HepG2 (cell line): ENCODE measurements at regions of chr6 and their contacts with region 1.

Region 1: GRCh38 chr6:25992413-25993037 is 29.9 kb downstream of the TRIM38 start:
- DNase-seq: peak; percentile 93
- ATAC-seq: peak; percentile 96
- H3K4me3 ChIP-seq: peak overlapping the region; percentile 81 to 88 (median 81)
- H3K27ac ChIP-seq: peak overlapping the region; percentile 90
- H3K4me1 ChIP-seq: peaks cover 25% of the 10 kb centered on the region
- H3K27me3 ChIP-seq: no peaks in the 10 kb centered on the region
- CTCF ChIP-seq: peak; percentile 96
- EP300 ChIP-seq: peak; percentile 50 to 79; a peak in 3 of 4 replicates
- POLR2A ChIP-seq: peak; percentile 81 to 96
- RAD21 ChIP-seq: peak; percentile 97

Region 2: GRCh38 chr6:25794784-25795183 is 197.7 kb before region 1 on chr6:
- CTCF ChIA-PET with region 1: no interaction called
- POLR2A ChIA-PET with region 1: no interaction called
- in situ Hi-C with region 1: no loop called
- intact Hi-C with region 1: no loop called
- DNase-seq: no peak
- ATAC-seq: no peak
- H3K4me3 ChIP-seq: no peak overlapping the region
- H3K27ac ChIP-seq: no peak overlapping the region
- H3K4me1 ChIP-seq: no peaks in the 10 kb centered on the region
- H3K27me3 ChIP-seq: no peaks in the 10 kb centered on the region
- CTCF ChIP-seq: no peak
- EP300 ChIP-seq: no peak
- POLR2A ChIP-seq: no peak
- RAD21 ChIP-seq: no peak

Region 3: DNA sequence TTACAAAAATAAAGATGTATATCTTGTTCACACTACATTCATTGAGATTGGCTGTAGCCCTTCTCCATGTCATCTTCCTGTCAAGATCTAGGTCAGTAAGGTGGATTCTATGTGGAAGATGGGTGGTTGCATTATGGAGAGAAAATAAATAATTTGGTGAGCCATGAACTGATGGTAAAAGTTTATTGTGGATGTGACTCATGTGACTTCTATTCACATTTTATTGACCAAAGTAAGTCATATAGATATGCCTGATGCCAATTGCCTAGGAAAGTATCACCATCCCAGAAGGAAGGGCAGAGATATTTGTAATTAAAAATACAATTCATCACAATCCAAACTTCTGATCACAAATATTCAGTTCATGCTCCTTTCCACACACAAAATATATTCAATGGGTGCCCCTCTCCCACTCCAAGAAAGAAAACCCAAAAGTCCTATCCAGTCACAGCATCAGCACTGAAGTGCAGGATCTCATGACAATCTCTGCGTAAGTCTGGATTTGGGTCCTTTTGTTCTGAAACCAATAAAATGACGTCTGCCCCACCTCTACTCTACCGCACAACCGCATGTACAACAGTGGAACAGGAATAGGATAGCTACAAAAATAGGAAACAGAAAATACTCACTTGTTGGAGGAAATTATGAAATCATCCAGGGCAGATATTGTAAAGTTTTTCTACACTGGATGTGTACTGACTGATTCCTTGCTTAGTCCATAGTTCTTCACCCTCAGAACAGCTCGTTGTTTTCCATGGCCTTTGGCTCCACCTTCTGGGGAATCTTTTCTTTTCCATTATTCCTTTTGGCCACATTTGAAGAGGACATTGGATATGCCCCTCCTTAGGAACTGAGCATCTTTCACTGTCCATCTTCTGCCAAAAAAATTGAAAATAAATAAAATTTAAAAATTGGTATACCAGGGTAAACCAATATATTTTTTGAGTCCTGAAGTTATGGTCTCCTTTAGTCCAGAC is 102.4 kb before region 1 on chr6:
- CTCF ChIA-PET with region 1: no interaction called
- POLR2A ChIA-PET with region 1: no interaction called
- in situ Hi-C with region 1: no loop called
- intact Hi-C with region 1: loop called (anchors 5 kb)
- DNase-seq: peak; percentile 70
- ATAC-seq: peak; percentile 95
- H3K4me3 ChIP-seq: no peak overlapping the region
- H3K27ac ChIP-seq: no peak overlapping the region
- H3K4me1 ChIP-seq: peaks cover 14% of the 10 kb centered on the region
- H3K27me3 ChIP-seq: no peaks in the 10 kb centered on the region
- CTCF ChIP-seq: peak; percentile 91
- EP300 ChIP-seq: no peak
- POLR2A ChIP-seq: no peak
- RAD21 ChIP-seq: peak; percentile 90

Region 4: GRCh38 chr6:25913741-25914140 is 78.8 kb before region 1 on chr6:
- CTCF ChIA-PET with region 1: no interaction called
- POLR2A ChIA-PET with region 1: interaction called, 19 read pairs
- in situ Hi-C with region 1: no loop called
- intact Hi-C with region 1: loop called (anchors 5 kb)
- DNase-seq: peak; percentile 83
- ATAC-seq: peak; percentile 86
- H3K4me3 ChIP-seq: no peak overlapping the region; a peak in 1 of 6 replicates
- H3K27ac ChIP-seq: peak overlapping the region; percentile 62
- H3K4me1 ChIP-seq: peaks cover 58% of the 10 kb centered on the region
- H3K27me3 ChIP-seq: no peaks in the 10 kb centered on the region
- CTCF ChIP-seq: no peak
- EP300 ChIP-seq: peak in 1 of 2 experiments; percentile 78; a peak in 1 of 4 replicates
- POLR2A ChIP-seq: peak in 1 of 2 experiments; percentile 24; a peak in 1 of 4 replicates
- RAD21 ChIP-seq: no peak

Region 5: DNA sequence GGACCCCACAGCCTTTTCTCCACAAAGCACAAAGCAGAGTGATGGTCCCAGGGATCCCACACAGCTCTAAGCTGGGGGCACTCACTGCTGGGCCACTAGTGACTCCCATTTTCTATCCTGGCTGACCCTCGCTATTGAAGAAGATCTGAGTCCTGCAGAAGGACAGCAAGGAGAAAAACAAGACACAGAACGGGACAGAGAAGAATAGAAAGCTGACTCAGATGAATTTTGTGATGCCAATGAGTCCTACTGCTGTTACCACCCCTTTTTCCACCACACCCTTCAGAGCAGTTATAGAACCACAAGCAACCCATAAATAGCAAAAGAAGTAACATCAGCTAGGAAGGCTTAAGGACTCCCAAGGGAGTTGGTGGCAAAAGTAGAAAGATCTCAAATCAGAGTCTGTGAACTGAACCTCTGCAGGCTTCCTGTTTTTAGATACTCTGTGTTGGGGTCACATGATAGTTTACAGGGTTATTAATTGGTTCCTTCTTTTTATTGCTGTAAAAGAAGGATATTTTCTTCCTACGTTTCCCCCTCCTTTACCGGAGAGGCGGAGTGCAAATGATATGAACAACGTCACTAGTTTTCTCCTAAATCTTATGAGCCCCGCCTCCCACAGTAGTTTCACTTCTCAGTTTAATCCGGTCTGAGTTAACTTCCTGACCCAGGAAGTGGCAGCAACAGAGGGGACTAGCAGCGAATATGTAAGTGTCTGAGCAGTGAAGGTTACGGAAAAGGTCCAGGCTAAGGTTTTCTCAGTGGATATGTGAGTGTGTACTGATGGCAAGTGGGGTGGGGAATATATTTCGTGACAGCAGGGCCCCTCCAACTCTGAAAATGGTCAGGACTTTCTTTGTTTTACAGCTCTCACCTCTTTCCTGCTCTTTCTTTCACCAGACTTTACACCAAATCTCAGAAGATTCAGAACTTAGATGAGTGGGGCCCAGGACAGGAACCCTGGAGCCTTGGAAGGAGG is 30.1 kb before region 1 on chr6 and contains the start of gene TRIM38:
- CTCF ChIA-PET with region 1: no interaction called
- POLR2A ChIA-PET with region 1: interaction called, 41 read pairs
- in situ Hi-C with region 1: no loop called
- intact Hi-C with region 1: loop called (anchors 2 kb)
- DNase-seq: peak; percentile 74
- ATAC-seq: peak; percentile 83
- H3K4me3 ChIP-seq: peak within 1 kb of the TSS; percentile 59 to 78 (median 73)
- H3K27ac ChIP-seq: peak within 1 kb of the TSS; percentile 54
- H3K4me1 ChIP-seq: peaks cover 39% of the 10 kb centered on the region
- H3K27me3 ChIP-seq: no peaks in the 10 kb centered on the region; a peak in 1 of 5 replicates
- CTCF ChIP-seq: no peak
- EP300 ChIP-seq: peak in 1 of 2 experiments; percentile 30; a peak in 1 of 4 replicates
- POLR2A ChIP-seq: peak; percentile 68 to 73
- RAD21 ChIP-seq: no peak
- total RNA-seq, gene TRIM38: 2.5 and 3.6 TPM in 2 replicates

Region 6: DNA sequence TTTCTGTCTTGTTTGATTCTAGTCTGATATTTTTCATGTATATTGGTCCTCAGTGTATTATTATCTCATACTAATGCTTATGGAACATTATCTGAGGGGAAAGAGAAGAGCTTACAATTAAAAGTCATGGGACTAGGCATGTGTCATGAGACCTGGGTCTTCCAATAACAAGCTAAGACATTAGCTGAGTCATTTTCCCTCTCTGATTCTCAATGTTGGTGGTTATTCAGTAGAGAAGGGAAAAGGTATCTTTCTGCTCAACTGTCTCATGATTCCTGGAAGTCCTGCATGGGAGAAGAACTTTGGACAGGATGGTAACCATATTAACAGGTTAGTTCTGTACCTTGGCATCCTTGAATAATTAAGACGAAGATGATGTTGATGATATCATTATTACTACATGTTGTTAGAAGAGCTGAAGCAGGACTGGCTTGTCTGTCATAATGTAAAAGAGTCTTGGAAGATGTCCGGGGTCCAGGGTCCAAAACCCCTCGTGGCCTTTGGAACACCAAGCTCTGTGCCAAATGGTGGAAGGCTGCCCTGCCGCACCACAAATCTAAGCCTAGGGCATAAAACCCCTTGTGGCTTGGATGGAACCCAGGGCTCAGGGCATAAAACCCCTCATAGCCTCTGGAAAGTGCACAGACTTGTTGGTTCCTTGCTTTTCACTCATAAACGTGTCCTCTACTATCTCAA is 10.8 kb before region 1 on chr6:
- CTCF ChIA-PET with region 1: no interaction called
- POLR2A ChIA-PET with region 1: interaction called, 14 read pairs
- in situ Hi-C with region 1: no loop called
- intact Hi-C with region 1: no loop called
- DNase-seq: no peak
- ATAC-seq: no peak
- H3K4me3 ChIP-seq: no peak overlapping the region
- H3K27ac ChIP-seq: no peak overlapping the region
- H3K4me1 ChIP-seq: peaks cover 12% of the 10 kb centered on the region; the same call in 1 of the 2 replicates
- H3K27me3 ChIP-seq: no peaks in the 10 kb centered on the region
- CTCF ChIP-seq: no peak
- EP300 ChIP-seq: no peak
- POLR2A ChIP-seq: no peak
- RAD21 ChIP-seq: no peak

Region 7: GRCh38 chr6:26025894-26026832 is 33.6 kb after region 1 on chr6:
- CTCF ChIA-PET with region 1: interaction called, 3 read pairs
- POLR2A ChIA-PET with region 1: interaction called, 44 read pairs
- in situ Hi-C with region 1: no loop called
- intact Hi-C with region 1: loop called (anchors 2 kb)
- DNase-seq: peak; percentile 97
- ATAC-seq: peak; percentile 68
- H3K4me3 ChIP-seq: peak overlapping the region; percentile 59 to 80 (median 71)
- H3K27ac ChIP-seq: peak overlapping the region; percentile 93
- H3K4me1 ChIP-seq: peaks cover 62% of the 10 kb centered on the region
- H3K27me3 ChIP-seq: no peaks in the 10 kb centered on the region; a peak in 1 of 5 replicates
- CTCF ChIP-seq: peak; percentile 95
- EP300 ChIP-seq: peak in 1 of 2 experiments; percentile 54; a peak in 2 of 4 replicates
- POLR2A ChIP-seq: peak in 1 of 2 experiments; percentile 28; a peak in 1 of 4 replicates
- RAD21 ChIP-seq: peak; percentile 77

Region 8: GRCh38 chr6:26045065-26045927 is 52.8 kb after region 1 on chr6:
- CTCF ChIA-PET with region 1: no interaction called
- POLR2A ChIA-PET with region 1: interaction called, 12 read pairs
- in situ Hi-C with region 1: no loop called
- intact Hi-C with region 1: no loop called
- DNase-seq: peak; percentile 99
- ATAC-seq: peak; percentile 74
- H3K4me3 ChIP-seq: peak overlapping the region; percentile 58 to 73 (median 63)
- H3K27ac ChIP-seq: peak overlapping the region; percentile 94
- H3K4me1 ChIP-seq: peaks cover 31% of the 10 kb centered on the region
- H3K27me3 ChIP-seq: no peaks in the 10 kb centered on the region; a peak in 1 of 5 replicates
- CTCF ChIP-seq: peak; percentile 62
- EP300 ChIP-seq: peak in 1 of 2 experiments; percentile 44; a peak in 2 of 4 replicates
- POLR2A ChIP-seq: peak; percentile 98 to 100
- RAD21 ChIP-seq: peak; percentile 69

Region 9: DNA sequence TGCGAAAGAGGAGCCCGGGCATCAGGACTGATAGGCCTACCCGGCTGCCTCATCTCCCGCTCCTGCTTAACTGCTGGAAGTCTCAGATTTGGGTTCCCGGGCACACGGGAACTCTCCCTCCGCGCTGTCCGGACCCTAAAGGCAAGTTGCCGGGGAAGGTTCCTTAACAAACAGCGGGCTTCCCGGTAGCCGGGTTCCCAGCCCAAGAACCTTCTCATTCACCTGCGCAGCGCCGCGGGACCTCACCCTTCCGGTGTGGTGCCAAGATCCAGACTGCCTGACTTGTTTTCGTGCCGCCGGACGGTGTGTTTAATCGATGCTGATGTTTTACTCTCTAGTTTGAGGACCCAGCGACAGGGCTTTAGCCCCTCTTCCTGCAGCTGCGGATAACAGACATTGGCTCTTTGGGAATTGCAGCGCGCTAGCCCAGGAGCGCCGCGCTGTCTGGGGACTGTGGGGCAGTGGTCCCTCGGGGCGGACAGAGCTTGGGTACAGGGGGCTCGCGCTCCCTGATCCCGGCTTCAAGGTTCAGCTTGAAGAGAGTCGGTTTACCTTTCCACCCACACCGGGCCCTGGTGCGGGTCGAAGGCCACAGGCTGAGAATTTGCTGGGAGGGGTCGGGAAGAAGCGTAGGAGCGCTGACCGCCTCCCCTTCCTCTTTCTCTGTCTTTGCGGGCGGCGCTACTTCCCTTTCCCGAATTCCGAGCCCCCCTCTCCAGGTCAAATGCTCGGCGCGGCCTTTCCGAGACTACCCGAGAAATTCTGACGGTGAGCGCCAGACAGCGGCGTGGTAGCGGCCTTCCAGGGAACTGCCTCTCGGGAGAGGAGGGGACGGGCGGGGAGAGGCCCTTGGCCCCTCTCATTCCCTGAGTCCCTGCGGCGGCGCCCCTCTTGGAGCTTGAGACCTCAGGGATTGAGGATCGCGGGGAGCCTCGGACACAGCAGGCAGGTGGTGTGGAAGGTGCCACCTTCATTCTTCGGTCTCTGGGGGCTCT is 621.5 kb after region 1 on chr6:
- CTCF ChIA-PET with region 1: no interaction called
- POLR2A ChIA-PET with region 1: no interaction called
- in situ Hi-C with region 1: no loop called
- intact Hi-C with region 1: no loop called
- DNase-seq: no peak
- ATAC-seq: peak; percentile 85
- H3K4me3 ChIP-seq: peak overlapping the region; percentile 39 to 62 (median 47); a peak in 4 of 6 replicates
- H3K27ac ChIP-seq: no peak overlapping the region
- H3K4me1 ChIP-seq: no peaks in the 10 kb centered on the region
- H3K27me3 ChIP-seq: peaks cover 4 to 19% of the 10 kb centered on the region in 2 experiments; a peak in 4 of 5 replicates
- CTCF ChIP-seq: no peak; the same call in 1 of the 2 replicates
- EP300 ChIP-seq: no peak
- POLR2A ChIP-seq: no peak
- RAD21 ChIP-seq: no peak